K562 (cell line): ENCODE measurements at regions of chr22 and their contacts with region 1.

Region 1: GRCh38 chr22:46131151-46131587 is 19.2 kb upstream of the PPARA start:
- DNase-seq: peak; percentile 21 to 58 (median 52)
- ATAC-seq: peak; percentile 79
- H3K4me3 ChIP-seq: no peak overlapping the region
- H3K27ac ChIP-seq: no peak overlapping the region
- H3K4me1 ChIP-seq: peaks cover 0 to 53% of the 10 kb centered on the region in 2 experiments; a peak in 2 of 5 replicates
- H3K27me3 ChIP-seq: no peaks in the 10 kb centered on the region
- CTCF ChIP-seq: peak; percentile 57 to 79 (median 72)
- EP300 ChIP-seq: no peak
- POLR2A ChIP-seq: no peak
- RAD21 ChIP-seq: peak in 1 of 2 experiments; percentile 29; a peak in 1 of 4 replicates

Region 2: DNA sequence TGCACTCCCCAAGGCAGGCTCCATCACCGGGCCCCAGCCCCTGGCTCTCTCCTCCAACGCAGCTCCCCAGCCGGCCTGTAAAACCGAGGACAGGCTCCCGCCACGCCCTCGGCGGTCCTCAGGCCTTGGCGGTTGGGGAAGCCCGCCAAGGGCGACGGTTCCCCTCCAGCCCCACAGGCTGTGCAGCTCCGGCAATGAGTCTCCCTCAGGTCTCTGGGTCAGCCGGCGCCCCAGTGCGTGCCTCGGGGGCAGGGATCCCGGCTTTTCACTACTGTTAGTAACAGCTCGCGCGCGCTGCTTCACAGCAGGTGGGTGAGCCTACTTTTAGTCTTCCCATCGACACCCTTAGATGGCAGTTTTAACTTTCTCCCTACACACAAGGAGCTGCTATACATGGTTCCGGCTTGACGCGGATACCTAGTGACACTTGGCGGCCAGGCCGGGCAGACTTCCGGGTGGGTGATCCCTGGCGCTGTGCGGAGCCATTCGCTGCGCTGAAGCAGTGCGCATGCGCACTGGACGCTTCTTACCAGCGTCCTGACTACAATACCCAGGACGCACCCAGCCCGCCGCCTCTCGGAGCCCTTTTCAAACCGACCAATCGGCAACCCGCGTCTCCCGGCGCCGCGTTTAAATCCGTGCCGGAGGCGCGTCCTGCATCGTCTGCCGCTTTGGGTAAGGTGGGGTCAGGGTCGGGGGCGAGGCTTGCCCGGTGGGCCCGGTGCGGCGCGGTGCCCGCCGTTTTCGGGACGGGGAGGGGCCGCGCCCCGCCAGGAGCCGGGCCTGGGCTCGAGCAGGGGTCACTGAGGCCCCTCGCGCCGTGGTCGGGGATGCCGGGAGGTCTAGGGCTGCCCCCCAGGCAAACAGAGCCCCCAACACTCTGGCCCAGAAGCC is 165.3 kb after region 1 on chr22 and contains the start of gene GTSE1:
- CTCF ChIA-PET with region 1: no interaction called
- POLR2A ChIA-PET with region 1: interaction called, 3 read pairs
- in situ Hi-C with region 1: no loop called
- intact Hi-C with region 1: loop called (anchors 5 kb)
- DNase-seq: peak; percentile 92 to 97 (median 94)
- ATAC-seq: peak; percentile 97
- H3K4me3 ChIP-seq: peak within 1 kb of the TSS; percentile 74
- H3K27ac ChIP-seq: peak within 1 kb of the TSS; percentile 68
- H3K4me1 ChIP-seq: peaks cover 2 to 24% of the 10 kb centered on the region in 2 experiments; a peak in 4 of 5 replicates
- H3K27me3 ChIP-seq: no peaks in the 10 kb centered on the region
- CTCF ChIP-seq: peak; percentile 23 to 53 (median 49); a peak in 4 of 6 replicates
- EP300 ChIP-seq: no peak
- POLR2A ChIP-seq: peak; percentile 85
- RAD21 ChIP-seq: peak; percentile 33 to 56
- polyA plus RNA-seq, gene GTSE1: 2.5 to 3.5 TPM